ENCODE measurements at regions of chr6 and their contacts with region 1.

Region 1: DNA sequence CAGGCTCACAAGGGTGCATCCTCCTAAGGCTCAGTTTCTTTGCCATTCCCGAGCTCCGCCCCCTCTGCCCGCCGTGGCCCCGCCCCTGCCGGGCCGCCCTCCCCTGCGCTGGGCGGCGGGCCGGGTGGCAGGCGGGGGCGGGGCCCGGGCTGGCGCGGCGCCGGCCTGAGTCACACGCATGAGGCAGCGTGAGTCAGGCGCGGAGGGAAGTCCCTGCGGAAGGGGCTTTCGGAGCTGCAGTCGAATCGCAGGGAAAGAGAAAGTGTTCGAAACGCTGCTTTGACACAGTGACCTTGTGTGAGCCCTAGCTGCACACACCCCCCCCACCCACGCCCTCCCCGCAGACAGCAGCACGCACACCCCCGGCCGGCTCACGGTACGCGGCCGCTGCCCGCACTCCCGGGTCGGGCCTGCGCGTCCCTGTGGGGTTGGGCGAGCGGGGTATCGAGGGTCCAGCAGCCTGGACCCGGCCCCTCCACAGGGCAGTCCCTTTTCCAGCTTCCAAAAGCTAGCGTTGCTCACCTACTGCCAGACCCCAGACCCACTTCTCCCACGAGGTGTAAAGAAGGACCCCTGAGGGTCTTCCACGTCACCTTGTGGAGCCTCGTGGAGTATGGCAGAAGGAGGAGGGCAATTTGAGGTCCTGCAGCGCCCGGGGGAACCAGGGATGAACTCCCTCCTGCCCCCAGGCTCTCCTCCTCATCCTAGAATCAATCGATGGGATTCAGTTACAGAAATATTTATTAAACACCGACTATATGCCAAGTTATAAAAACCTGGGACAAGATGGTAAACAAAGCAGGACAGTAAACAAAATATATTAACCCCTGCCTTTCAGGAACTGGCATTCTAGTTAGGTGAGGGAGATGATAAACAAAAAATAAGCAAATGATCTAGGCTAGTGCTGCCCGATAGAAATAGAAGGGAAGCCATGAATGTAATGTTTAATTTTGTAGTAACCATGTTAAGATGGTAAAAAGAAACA is 12.4 kb upstream of the HMGA1 start:
- DNase-seq: peak; percentile 96
- CTCF ChIP-seq: no peak

Region 2: GRCh38 chr6:33254591-33254990 is 969.7 kb before region 1 on chr6:
- CTCF ChIA-PET with region 1: no interaction called
- POLR2A ChIA-PET with region 1: interaction called, 13 read pairs
- DNase-seq: no peak
- CTCF ChIP-seq: no peak

Region 3: DNA sequence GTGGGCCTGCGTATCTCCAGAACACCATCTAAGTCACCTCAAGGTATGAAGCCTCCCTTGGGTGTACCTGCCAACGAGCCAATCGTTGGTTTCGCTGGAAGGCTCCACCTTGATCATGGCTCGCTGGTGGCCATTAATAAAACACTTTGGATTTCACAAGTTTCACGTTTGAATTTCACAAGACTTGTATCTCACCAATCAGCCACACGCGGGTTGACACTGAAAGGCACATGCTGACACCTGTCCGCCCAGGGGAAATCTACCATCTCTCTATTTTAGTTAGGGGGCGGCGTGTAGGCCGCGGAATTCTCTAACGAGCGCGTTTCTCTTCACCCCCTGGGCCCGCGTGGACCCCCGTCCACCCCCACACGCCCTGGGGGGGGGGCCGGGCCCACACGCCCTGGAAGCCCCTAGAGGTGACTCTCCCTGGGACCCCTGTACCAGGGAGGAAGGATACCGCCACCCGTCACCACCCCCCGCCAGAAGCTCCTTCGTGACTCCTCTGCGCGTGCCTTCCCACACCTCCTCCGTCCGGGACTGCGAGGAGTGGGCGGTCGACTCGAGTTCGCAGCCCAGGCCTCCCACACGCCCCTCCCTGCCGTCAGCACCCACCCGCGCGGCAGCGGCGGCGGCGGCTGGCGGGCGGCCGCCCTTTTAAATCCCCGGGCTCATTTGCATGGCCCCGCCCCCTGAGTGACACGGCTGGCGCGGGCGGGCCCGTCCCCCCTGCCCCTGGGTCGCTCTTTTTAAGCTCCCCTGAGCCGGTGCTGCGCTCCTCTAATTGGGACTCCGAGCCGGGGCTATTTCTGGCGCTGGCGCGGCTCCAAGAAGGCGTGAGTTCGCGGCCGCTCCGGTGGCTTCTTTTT is 12.1 kb after region 1 on chr6 and contains the start of gene HMGA1:
- CTCF ChIA-PET with region 1: interaction called, 4 read pairs
- POLR2A ChIA-PET with region 1: interaction called, 27 read pairs
- DNase-seq: peak; percentile 95
- CTCF ChIP-seq: no peak

Region 4: GRCh38 chr6:34273242-34273805 is 49.1 kb after region 1 on chr6:
- CTCF ChIA-PET with region 1: no interaction called
- POLR2A ChIA-PET with region 1: no interaction called
- DNase-seq: peak; percentile 42
- CTCF ChIP-seq: no peak

Measured in GM10248 (cell line).